ENCODE measurements at regions of chr11 and their contacts with region 1.

Region 1: DNA sequence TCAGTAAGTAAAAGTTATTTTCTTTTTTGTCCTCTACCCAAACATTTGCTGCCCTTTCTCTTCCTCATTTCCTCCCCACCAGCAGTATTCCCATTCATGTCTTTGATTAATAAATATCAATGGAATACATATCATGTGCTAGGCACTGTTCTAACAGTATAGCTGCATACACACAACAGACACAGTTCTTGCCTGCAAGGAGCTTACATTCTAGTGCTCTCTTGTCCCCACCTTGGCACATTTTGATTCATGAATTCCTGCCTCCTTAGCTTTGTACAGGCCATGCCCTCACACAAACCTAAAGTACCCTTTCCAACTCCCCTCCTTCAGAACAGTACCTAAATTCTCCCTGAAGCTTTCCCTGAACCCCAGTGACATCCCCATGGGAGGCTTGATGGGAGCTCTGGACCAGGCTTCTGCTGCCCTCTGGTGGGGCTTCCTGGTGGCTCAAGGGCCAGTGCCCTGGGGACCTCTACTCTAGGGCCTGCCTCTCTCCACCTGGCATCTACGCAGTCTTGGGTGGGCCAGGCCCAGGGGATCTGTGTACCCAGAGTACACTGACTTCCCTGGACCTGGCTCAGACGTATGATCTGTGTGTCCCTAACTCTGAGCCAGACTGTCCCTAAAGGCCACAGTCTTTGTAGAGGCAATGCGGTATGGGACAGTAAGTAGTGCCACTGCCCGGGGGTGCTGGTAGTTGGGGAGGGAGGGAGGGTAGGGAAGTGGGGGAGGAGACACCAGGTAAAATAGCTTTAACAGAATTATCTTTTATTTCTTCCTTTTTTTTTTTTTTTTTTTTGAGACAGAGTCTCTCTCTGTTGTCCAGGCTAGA is 14.1 kb downstream of the RPS13 start:
- DNase-seq: peak; percentile 77
- ATAC-seq: peak; percentile 90
- H3K4me3 Mint-ChIP-seq: no peak overlapping the region
- H3K27ac Mint-ChIP-seq: no peak overlapping the region
- H3K4me1 Mint-ChIP-seq: no peaks in the 10 kb centered on the region
- H3K27me3 Mint-ChIP-seq: no peaks in the 10 kb centered on the region
- CTCF ChIP-seq: peak; percentile 85

Region 2: GRCh38 chr11:16785520-16786128 is 277.8 kb before region 1 on chr11:
- CTCF ChIA-PET with region 1: interaction called, 60 read pairs
- POLR2A ChIA-PET with region 1: no interaction called
- intact Hi-C with region 1: loop called (anchors 5 kb)
- DNase-seq: peak; percentile 73
- ATAC-seq: peak; percentile 89
- H3K4me3 Mint-ChIP-seq: no peak overlapping the region
- H3K27ac Mint-ChIP-seq: no peak overlapping the region
- H3K4me1 Mint-ChIP-seq: no peaks in the 10 kb centered on the region
- H3K27me3 Mint-ChIP-seq: no peaks in the 10 kb centered on the region
- CTCF ChIP-seq: peak; percentile 72

Region 3: GRCh38 chr11:16924826-16925560 is 138.4 kb before region 1 on chr11:
- CTCF ChIA-PET with region 1: interaction called, 11 read pairs
- POLR2A ChIA-PET with region 1: no interaction called
- intact Hi-C with region 1: no loop called
- DNase-seq: no peak
- ATAC-seq: peak; percentile 10
- H3K4me3 Mint-ChIP-seq: peak overlapping the region; percentile 71
- H3K27ac Mint-ChIP-seq: no peak overlapping the region
- H3K4me1 Mint-ChIP-seq: peaks cover 11% of the 10 kb centered on the region
- H3K27me3 Mint-ChIP-seq: peaks cover 47% of the 10 kb centered on the region
- CTCF ChIP-seq: no peak

Region 4: DNA sequence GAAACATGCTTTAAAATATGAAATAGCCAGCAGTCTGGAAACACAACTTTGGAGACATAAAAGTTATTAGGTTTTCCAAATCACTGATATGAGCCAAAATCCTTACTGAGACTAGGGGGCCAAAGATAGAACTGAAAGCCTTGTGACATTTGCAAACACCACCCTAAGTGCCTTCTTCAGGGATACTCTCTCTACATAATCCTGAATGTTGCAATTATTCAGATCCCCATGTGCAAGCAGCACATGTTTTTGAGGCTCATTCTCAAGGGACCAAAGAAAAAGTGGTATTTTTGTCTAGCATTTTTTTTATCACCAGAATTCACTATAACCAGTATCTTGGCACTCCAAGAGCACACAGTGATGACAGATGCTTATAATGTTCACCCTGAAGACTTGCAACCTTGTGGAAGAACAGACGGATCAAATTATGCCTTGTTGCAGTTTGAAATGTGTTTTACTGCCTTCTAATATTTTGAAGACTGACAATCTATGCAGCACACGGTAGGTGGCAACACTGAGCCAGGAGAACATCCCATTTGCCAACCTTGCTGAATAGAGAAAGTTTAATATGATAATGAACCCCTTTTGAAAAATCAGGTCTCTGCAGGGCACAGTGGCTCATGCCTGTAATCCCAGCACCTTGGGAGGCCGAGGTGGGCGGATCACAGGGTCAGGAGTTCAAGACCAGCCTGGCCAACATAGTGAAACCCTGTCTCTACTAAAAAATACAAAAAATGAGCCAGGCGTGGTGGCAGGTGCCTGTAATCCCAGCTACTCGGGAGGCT is 127.7 kb before region 1 on chr11:
- CTCF ChIA-PET with region 1: interaction called, 28 read pairs
- POLR2A ChIA-PET with region 1: no interaction called
- intact Hi-C with region 1: no loop called
- DNase-seq: peak; percentile 57
- ATAC-seq: peak; percentile 80
- H3K4me3 Mint-ChIP-seq: no peak overlapping the region
- H3K27ac Mint-ChIP-seq: no peak overlapping the region
- H3K4me1 Mint-ChIP-seq: no peaks in the 10 kb centered on the region
- H3K27me3 Mint-ChIP-seq: peaks cover 16% of the 10 kb centered on the region
- CTCF ChIP-seq: peak; percentile 65

Region 5: DNA sequence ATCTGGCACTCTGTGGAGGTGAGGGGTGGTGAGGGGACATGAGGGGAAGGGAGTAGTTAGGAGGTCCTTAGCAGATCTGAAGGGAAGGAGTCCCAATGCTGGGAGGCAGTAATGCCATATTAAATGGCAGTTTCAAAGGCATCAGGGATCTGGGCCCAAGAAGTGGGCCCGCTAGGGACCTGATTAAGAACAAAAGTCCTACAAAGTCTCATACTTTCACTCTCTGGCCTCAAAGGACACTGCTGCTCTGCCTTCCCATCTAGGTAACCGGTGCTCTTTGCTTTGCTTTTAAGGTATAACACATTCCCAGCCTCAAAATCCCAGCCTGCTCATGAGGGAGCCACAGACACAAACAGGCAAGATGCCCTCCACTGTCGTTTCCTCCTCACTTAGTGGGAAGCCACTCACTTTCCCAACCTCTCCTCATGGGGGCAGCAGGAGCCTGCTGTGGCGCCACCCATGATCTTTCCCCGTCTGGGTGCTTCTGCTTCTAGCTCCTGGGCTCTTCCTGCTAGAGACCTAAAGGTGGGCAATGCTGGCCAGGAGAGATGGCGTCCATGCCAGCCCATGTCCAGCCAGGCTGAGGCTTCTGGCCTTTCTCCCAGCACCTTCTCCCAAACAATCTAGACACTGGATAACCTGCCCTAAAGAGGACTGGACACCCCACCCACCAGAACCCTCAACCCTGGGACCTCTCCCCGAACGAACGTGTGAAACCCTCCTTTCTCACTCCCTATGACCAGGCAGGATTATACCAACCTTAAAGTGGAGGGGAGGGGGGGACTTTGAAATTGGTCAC is 117.5 kb before region 1 on chr11:
- CTCF ChIA-PET with region 1: interaction called, 51 read pairs
- POLR2A ChIA-PET with region 1: interaction called, 3 read pairs
- intact Hi-C with region 1: loop called (anchors 5 kb)
- DNase-seq: peak; percentile 72
- ATAC-seq: peak; percentile 90
- H3K4me3 Mint-ChIP-seq: no peak overlapping the region
- H3K27ac Mint-ChIP-seq: no peak overlapping the region
- H3K4me1 Mint-ChIP-seq: peaks cover 6% of the 10 kb centered on the region
- H3K27me3 Mint-ChIP-seq: peaks cover 2% of the 10 kb centered on the region
- CTCF ChIP-seq: peak; percentile 60

Region 6: GRCh38 chr11:16969010-16969999 is 94.1 kb before region 1 on chr11:
- CTCF ChIA-PET with region 1: no interaction called
- POLR2A ChIA-PET with region 1: no interaction called
- intact Hi-C with region 1: no loop called
- DNase-seq: peak; percentile 53
- ATAC-seq: peak; percentile 82
- H3K4me3 Mint-ChIP-seq: no peak overlapping the region
- H3K27ac Mint-ChIP-seq: no peak overlapping the region
- H3K4me1 Mint-ChIP-seq: peaks cover 17% of the 10 kb centered on the region
- H3K27me3 Mint-ChIP-seq: no peaks in the 10 kb centered on the region
- CTCF ChIP-seq: no peak

Region 7: DNA sequence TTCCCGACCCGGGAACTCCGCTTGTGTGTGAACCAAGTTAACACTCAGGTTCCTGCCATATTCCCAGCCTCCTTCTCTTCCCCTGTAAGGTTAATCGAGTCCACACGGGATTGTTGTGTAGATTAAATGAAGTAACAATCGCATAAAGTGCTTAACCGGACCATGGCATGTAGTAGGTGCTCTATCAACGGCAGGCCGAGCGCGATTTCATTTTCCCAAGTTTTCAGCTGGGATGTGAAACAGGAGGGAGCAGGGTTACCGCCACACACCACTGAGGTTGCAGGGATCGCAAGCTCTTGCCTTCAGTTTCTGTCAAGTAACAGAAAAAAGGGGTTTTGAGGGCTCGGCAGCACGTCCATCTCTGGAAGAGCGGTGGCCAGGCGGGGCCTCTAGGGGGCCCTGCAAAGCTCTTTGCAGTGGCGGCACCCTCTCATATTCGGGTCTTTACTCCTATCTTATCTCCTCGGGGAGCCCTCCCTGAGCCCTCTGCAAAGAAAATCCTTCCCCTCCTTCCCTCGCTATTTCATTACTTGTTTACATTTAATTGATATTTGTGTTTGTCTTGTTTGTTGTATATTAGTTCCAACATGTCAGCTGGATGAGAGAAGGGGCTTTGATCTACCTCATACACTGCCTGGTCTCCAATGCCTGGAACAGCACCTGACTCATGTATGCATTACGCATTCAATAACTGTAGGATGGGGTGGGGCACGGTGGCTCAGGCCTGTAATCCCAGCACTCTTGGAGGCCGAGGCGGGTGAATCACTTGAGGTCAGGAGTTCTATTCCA is 48.4 kb before region 1 on chr11:
- CTCF ChIA-PET with region 1: interaction called, 3 read pairs
- POLR2A ChIA-PET with region 1: no interaction called
- intact Hi-C with region 1: loop called (anchors 5 kb)
- DNase-seq: peak; percentile 33
- ATAC-seq: peak; percentile 66
- H3K4me3 Mint-ChIP-seq: peak overlapping the region; percentile 80
- H3K27ac Mint-ChIP-seq: peak overlapping the region; percentile 30
- H3K4me1 Mint-ChIP-seq: peaks cover 4% of the 10 kb centered on the region
- H3K27me3 Mint-ChIP-seq: peaks cover 18% of the 10 kb centered on the region
- CTCF ChIP-seq: peak; percentile 63

Measured in activated CD8-positive, alpha-beta T cell treated with anti-CD3 and anti-CD28 coated beads for 36 hours (primary cell).